GM12878 (cell line): ENCODE measurements at regions of chr20 and their contacts with region 1.

Region 1: GRCh38 chr20:62121776-62122631 is at the start of gene LSM14B:
- DNase-seq: peak; percentile 78
- ATAC-seq: peak; percentile 89
- H3K4me3 ChIP-seq: peak within 1 kb of the TSS; percentile 91
- H3K27ac ChIP-seq: peak within 1 kb of the TSS; percentile 80
- H3K4me1 ChIP-seq: no peaks in the 10 kb centered on the region; the same call in none of the 2 replicates
- H3K27me3 ChIP-seq: no peaks in the 10 kb centered on the region
- CTCF ChIP-seq: no peak
- EP300 ChIP-seq: no peak
- POLR2A ChIP-seq: peak; percentile 71
- RAD21 ChIP-seq: no peak
- polyA plus RNA-seq, gene LSM14B: 0.56 to 1.8 TPM

Region 2: DNA sequence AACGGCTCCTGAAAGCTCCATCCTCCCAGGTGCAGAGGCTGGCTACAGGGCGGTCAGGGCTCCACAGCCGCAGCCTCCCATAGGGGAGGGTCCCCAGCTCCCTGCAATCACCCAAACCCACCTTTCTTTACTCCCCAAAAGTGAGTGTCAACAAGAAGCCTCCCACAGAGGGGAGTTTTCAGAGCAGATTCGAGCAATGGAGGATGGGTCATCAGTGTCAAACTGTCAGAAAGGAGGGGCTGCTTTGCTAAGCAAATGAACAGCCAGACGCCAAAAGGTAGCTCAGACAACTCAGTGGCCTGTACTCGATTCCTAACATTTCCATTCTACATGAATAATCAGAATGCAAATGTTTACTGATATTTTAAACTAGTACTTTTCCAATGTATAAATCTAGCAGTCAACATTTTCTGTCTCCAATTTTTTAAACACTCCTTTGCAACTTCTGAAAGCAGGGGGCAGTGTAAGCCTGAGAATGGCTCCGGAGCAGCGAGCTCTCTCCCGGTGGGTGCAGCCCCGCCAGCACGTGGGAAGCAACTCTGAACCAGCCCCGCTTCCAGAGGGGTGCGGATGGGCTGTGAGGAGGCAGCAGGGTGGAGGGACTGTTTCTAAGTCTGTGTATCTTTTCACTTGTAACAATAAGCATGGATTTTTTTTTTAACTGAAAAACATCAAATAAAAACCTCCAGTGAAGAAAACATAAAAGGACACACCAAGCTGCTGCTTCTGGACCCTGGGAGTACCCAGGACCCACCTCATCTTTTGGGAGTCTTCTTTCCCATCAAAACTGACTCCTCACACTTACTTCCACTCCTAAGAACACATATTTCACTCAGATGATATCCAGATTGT is 111.2 kb before region 1 on chr20:
- CTCF ChIA-PET with region 1: interaction called, 6 read pairs
- POLR2A ChIA-PET with region 1: no interaction called
- RAD21 ChIA-PET with region 1: interaction called, 4 read pairs
- SMC1A ChIA-PET with region 1: interaction called, 4 read pairs
- in situ Hi-C with region 1: loop called (anchors 5 kb)
- intact Hi-C with region 1: loop called (anchors 5 kb)
- DNase-seq: peak; percentile 7
- ATAC-seq: peak; percentile 91
- H3K4me3 ChIP-seq: no peak overlapping the region
- H3K27ac ChIP-seq: no peak overlapping the region
- H3K4me1 ChIP-seq: no peaks in the 10 kb centered on the region
- H3K27me3 ChIP-seq: no peaks in the 10 kb centered on the region
- CTCF ChIP-seq: peak; percentile 51 to 79 (median 54); a peak in 4 of 6 replicates
- EP300 ChIP-seq: no peak
- POLR2A ChIP-seq: no peak
- RAD21 ChIP-seq: peak; percentile 82

Region 3: GRCh38 chr20:62136283-62137091 is 14.5 kb after region 1 on chr20:
- CTCF ChIA-PET with region 1: interaction called, 26 read pairs
- POLR2A ChIA-PET with region 1: interaction called, 8 read pairs
- RAD21 ChIA-PET with region 1: interaction called, 7 read pairs
- SMC1A ChIA-PET with region 1: interaction called, 7 read pairs
- in situ Hi-C with region 1: no loop called
- intact Hi-C with region 1: no loop called
- DNase-seq: no peak
- ATAC-seq: peak; percentile 78
- H3K4me3 ChIP-seq: no peak overlapping the region
- H3K27ac ChIP-seq: no peak overlapping the region
- H3K4me1 ChIP-seq: peaks cover 8% of the 10 kb centered on the region
- H3K27me3 ChIP-seq: no peaks in the 10 kb centered on the region
- CTCF ChIP-seq: peak; percentile 73 to 82 (median 79)
- EP300 ChIP-seq: no peak
- POLR2A ChIP-seq: no peak
- RAD21 ChIP-seq: peak; percentile 69

Region 4: GRCh38 chr20:62182613-62183425 is 60.8 kb after region 1 on chr20 and contains the start of gene MTG2:
- CTCF ChIA-PET with region 1: no interaction called
- POLR2A ChIA-PET with region 1: interaction called, 3 read pairs
- RAD21 ChIA-PET with region 1: no interaction called
- SMC1A ChIA-PET with region 1: no interaction called
- in situ Hi-C with region 1: no loop called
- intact Hi-C with region 1: loop called (anchors 10 kb)
- DNase-seq: peak; percentile 79
- ATAC-seq: peak; percentile 97
- H3K4me3 ChIP-seq: peak within 1 kb of the TSS; percentile 100
- H3K27ac ChIP-seq: peak within 1 kb of the TSS; percentile 78
- H3K4me1 ChIP-seq: no peaks in the 10 kb centered on the region
- H3K27me3 ChIP-seq: no peaks in the 10 kb centered on the region
- CTCF ChIP-seq: no peak
- EP300 ChIP-seq: 0 out of 4 replicates have a peak, but pooled peaks of 1 of the 2 experiments have one; percentile 46
- POLR2A ChIP-seq: peak; percentile 100
- RAD21 ChIP-seq: no peak
- polyA plus RNA-seq, gene MTG2: 6.2 to 7.3 TPM